Naive thymus-derived CD4-positive, alpha-beta T cell (primary cell): ENCODE measurements at regions of chr3 and their contacts with region 1.

Region 1: GRCh38 chr3:9731206-9732079 is at the start of gene BRPF1:
- DNase-seq: peak; percentile 91 to 99 (median 98)
- ATAC-seq: peak; percentile 96
- H3K4me3 ChIP-seq: peak within 1 kb of the TSS; percentile 85
- H3K4me3 Mint-ChIP-seq: peak within 1 kb of the TSS; percentile 91 to 98 (median 93)
- H3K27ac ChIP-seq: peak within 1 kb of the TSS; percentile 88
- H3K27ac Mint-ChIP-seq: peak within 1 kb of the TSS; percentile 86 to 97 (median 95)
- H3K4me1 ChIP-seq: peaks cover 22 to 32% of the 10 kb centered on the region in 2 donors
- H3K4me1 Mint-ChIP-seq: peaks cover 49 to 77% (median 72%) of the 10 kb centered on the region in 7 donors
- H3K27me3 ChIP-seq: no peaks in the 10 kb centered on the region
- H3K27me3 Mint-ChIP-seq: no peaks in the 10 kb centered on the region
- total RNA-seq, gene BRPF1: 32.0 to 42.4 (median 39.5) TPM

Region 2: DNA sequence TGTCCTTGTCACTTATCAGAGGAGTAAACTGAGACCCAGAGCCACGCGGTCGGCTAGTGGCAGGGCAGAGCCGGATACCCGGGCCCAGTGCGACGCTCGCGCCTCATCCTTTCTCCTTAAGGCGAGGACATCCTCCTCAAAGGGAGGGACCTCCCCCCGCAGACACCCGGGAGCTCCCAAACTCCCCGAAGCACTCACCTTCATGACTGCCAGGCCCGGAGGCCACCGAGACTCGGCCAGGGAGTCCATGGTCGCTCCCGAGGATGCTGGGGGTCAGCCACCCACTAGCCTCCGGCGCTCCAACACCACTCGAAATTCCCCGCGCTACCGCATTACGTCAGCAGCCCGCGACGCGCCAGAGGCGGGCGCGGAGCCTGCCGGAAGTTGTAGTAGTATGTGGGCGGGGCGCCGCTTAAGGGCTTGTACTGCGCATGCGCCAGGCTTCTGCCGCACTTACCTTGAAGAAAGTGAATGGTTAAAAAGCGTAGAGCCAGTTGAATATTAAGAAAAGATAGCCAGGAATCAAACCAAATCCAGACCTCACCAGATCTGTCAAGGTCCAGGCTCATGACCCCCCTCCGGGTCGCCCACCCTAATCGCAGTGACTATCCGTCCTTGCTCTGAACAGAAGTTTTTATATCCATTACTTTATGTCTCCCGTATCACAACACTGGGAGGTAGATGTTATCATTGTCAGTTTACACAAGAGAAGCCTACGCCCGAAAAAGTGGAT is 768.1 kb before region 1 on chr3 and contains the start of gene RAD18:
- CTCF ChIA-PET with region 1: no interaction called
- POLR2A ChIA-PET with region 1: no interaction called
- intact Hi-C with region 1: loop called (anchors 1 to 5 kb)
- DNase-seq: peak; percentile 87 to 95 (median 92)
- ATAC-seq: peak; percentile 97
- H3K4me3 ChIP-seq: peak within 1 kb of the TSS; percentile 80
- H3K4me3 Mint-ChIP-seq: peak within 1 kb of the TSS; percentile 85 to 99 (median 96)
- H3K27ac ChIP-seq: peak within 1 kb of the TSS; percentile 94
- H3K27ac Mint-ChIP-seq: peak within 1 kb of the TSS; percentile 94 to 99 (median 97)
- H3K4me1 ChIP-seq: peaks cover 6 to 10% of the 10 kb centered on the region in 2 donors
- H3K4me1 Mint-ChIP-seq: peaks cover 7 to 45% (median 38%) of the 10 kb centered on the region in 7 donors
- H3K27me3 ChIP-seq: no peaks in the 10 kb centered on the region
- H3K27me3 Mint-ChIP-seq: peaks cover 0 to 8% (median 4%) of the 10 kb centered on the region in 5 donors
- total RNA-seq, gene RAD18: 9.3 to 36.4 (median 18.2) TPM

Region 3: DNA sequence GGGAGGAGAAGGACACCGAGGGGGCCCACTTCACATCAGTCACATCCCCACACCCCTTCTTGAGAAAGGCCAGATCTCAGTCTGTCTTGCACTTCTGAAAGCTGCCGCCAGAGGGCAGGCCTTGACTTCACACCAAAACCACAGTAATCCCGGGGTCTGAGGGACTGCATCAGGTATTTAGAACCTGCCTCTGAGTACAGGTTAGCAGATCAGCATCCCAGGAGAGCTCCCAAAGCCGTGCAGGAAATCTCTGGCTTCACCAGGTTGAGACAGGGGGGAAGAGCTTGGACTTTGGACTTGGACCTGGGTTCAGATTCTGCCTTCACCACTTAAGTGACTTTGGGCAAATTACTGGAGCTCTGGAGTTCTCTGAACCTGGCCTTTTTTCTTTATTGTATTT is 228.2 kb before region 1 on chr3:
- CTCF ChIA-PET with region 1: no interaction called
- POLR2A ChIA-PET with region 1: no interaction called
- intact Hi-C with region 1: loop called in 1 of 2 experiments (anchors 1 kb)
- DNase-seq: peak; percentile 38 to 71 (median 60)
- ATAC-seq: peak; percentile 71
- H3K4me3 ChIP-seq: no peak overlapping the region
- H3K4me3 Mint-ChIP-seq: no peak overlapping the region
- H3K27ac ChIP-seq: no peak overlapping the region
- H3K27ac Mint-ChIP-seq: no peak overlapping the region
- H3K4me1 ChIP-seq: peaks cover 7 to 11% of the 10 kb centered on the region in 2 donors
- H3K4me1 Mint-ChIP-seq: peaks cover 0 to 9% (median 5%) of the 10 kb centered on the region in 7 donors
- H3K27me3 ChIP-seq: peaks cover 5 to 15% of the 10 kb centered on the region in 2 donors
- H3K27me3 Mint-ChIP-seq: peaks cover 28 to 44% (median 34%) of the 10 kb centered on the region in 5 donors

Region 4: GRCh38 chr3:9669720-9670432 is 61.6 kb before region 1 on chr3:
- CTCF ChIA-PET with region 1: no interaction called
- POLR2A ChIA-PET with region 1: no interaction called
- intact Hi-C with region 1: no loop called
- DNase-seq: no peak
- ATAC-seq: no peak
- H3K4me3 ChIP-seq: no peak overlapping the region
- H3K4me3 Mint-ChIP-seq: no peak overlapping the region
- H3K27ac ChIP-seq: no peak overlapping the region
- H3K27ac Mint-ChIP-seq: peak overlapping the region in 2 of 9 donors; percentile 17 to 45
- H3K4me1 ChIP-seq: no peaks in the 10 kb centered on the region
- H3K4me1 Mint-ChIP-seq: peaks cover 0 to 7% (median 0%) of the 10 kb centered on the region in 7 donors
- H3K27me3 ChIP-seq: no peaks in the 10 kb centered on the region
- H3K27me3 Mint-ChIP-seq: no peaks in the 10 kb centered on the region

Region 5: GRCh38 chr3:9743548-9743947 is 12.1 kb after region 1 on chr3:
- CTCF ChIA-PET with region 1: interaction called, 7 read pairs
- POLR2A ChIA-PET with region 1: interaction called, 33 read pairs
- intact Hi-C with region 1: no loop called
- DNase-seq: no peak
- ATAC-seq: no peak
- H3K4me3 ChIP-seq: no peak overlapping the region
- H3K4me3 Mint-ChIP-seq: no peak overlapping the region
- H3K27ac ChIP-seq: no peak overlapping the region
- H3K27ac Mint-ChIP-seq: no peak overlapping the region
- H3K4me1 ChIP-seq: no peaks in the 10 kb centered on the region
- H3K4me1 Mint-ChIP-seq: peaks cover 4 to 12% (median 8%) of the 10 kb centered on the region in 7 donors
- H3K27me3 ChIP-seq: no peaks in the 10 kb centered on the region
- H3K27me3 Mint-ChIP-seq: no peaks in the 10 kb centered on the region

Region 6: DNA sequence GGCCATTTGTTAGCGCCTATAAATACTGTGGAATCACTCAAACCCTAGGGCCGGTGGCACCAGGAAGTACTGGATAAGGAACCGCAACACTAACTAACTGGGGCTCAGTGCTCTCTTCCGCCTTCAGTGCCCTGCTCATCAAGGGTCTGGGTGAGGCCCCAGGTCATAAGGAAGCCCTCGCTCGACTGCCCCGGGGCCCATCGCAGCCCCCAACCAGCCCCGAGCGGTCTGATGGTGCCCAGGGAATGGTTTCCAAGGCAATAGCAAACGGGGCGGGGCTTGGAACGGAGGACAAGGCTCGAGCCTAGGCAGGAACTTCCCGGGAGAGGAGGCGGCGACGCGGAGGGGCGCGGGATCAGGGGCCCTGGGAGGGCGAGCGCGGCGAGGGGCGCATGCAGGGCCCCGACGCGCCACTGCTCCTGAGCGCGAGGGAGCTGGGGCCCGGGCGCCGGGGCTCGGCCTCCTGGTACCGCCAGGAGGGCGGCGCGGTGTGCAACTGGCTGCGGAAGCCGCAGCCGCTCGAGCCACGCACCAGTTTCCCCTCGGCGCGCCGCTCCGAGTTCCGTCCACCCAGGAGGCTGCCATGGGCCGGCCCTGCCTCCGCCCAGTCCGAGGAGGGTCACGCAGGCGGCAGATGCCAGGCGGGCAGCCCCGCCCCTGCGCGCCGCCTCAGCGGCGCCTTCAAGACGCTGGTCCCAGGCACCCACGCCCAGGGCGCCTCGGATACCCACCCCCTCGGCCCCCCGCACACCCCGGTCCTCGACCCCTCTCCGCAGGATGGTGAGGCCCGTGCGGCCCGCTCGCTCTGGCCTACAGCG is 78.4 kb after region 1 on chr3 and contains the start of gene TTLL3:
- CTCF ChIA-PET with region 1: no interaction called
- POLR2A ChIA-PET with region 1: interaction called, 15 read pairs
- intact Hi-C with region 1: loop called in 1 of 2 experiments (anchors 1 kb)
- DNase-seq: peak; percentile 33 to 50 (median 43)
- ATAC-seq: peak; percentile 76
- H3K4me3 ChIP-seq: peak within 1 kb of the TSS; percentile 76
- H3K4me3 Mint-ChIP-seq: peak within 1 kb of the TSS; percentile 89 to 96 (median 92)
- H3K27ac ChIP-seq: peak within 1 kb of the TSS; percentile 90
- H3K27ac Mint-ChIP-seq: peak within 1 kb of the TSS; percentile 92 to 98 (median 96)
- H3K4me1 ChIP-seq: peaks cover 21 to 28% of the 10 kb centered on the region in 2 donors
- H3K4me1 Mint-ChIP-seq: peaks cover 31 to 41% (median 38%) of the 10 kb centered on the region in 7 donors
- H3K27me3 ChIP-seq: no peaks in the 10 kb centered on the region
- H3K27me3 Mint-ChIP-seq: no peaks in the 10 kb centered on the region
- total RNA-seq, gene TTLL3: 54.9 to 106 (median 68.0) TPM

Region 7: GRCh38 chr3:9986237-9986725 is 254.8 kb after region 1 on chr3:
- CTCF ChIA-PET with region 1: no interaction called
- POLR2A ChIA-PET with region 1: no interaction called
- intact Hi-C with region 1: loop called in 1 of 2 experiments (anchors 5 kb)
- DNase-seq: no peak
- ATAC-seq: peak; percentile 52
- H3K4me3 ChIP-seq: peak overlapping the region; percentile 100
- H3K4me3 Mint-ChIP-seq: peak overlapping the region; percentile 95 to 99 (median 98)
- H3K27ac ChIP-seq: peak overlapping the region; percentile 96
- H3K27ac Mint-ChIP-seq: peak overlapping the region; percentile 95 to 100 (median 98)
- H3K4me1 ChIP-seq: peaks cover 13 to 15% of the 10 kb centered on the region in 2 donors
- H3K4me1 Mint-ChIP-seq: peaks cover 0 to 48% (median 35%) of the 10 kb centered on the region in 7 donors
- H3K27me3 ChIP-seq: no peaks in the 10 kb centered on the region
- H3K27me3 Mint-ChIP-seq: no peaks in the 10 kb centered on the region

Region 8: DNA sequence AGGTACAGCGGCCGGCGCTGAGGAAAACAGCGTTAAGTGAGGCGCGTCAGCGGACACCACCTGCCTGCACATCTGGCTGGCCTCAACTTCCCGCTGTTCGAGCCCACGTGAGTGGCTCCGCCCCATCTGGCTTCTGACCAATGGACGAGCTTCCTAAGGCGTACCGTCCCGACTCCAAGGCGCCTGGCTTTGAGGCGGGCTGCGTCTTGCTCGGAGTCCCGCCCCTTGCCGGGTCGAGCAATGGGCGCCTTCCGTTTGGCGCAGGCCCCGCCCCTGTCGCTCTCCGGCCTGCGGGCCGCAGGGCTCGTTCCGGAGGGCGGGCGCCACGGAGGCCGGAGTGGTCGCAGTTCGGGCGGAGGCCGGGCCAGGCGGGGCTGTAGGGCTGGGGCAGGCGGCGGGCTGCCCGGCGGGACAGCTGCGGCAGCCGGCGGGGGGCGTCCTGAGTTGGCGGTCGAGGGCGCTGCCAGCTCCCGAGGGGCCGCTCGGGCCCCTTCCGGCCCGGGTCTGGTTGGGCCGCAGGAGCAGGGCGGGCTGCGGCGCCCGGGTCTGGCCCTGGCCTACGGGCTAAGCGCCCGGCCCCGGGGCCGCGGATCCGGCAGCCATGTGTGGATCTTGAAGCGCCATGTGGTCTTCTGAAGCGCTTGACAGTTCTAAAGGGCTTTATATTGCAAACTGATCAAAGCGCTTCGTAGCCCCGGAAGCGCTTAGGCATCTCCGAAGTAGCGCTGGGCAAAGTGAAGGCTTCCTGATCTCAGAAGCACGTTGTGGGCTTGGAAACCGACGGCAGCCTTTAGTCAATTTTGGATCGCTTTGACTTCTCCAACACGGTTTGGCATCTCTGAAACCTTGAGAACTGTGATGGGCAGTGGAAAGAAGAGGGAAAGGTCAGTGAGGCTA is 517.0 kb after region 1 on chr3 and contains the start of gene TATDN2:
- CTCF ChIA-PET with region 1: no interaction called
- POLR2A ChIA-PET with region 1: no interaction called
- intact Hi-C with region 1: loop called (anchors 1 kb)
- DNase-seq: peak; percentile 80 to 91 (median 88)
- ATAC-seq: peak; percentile 98
- H3K4me3 ChIP-seq: peak within 1 kb of the TSS; percentile 99
- H3K4me3 Mint-ChIP-seq: peak within 1 kb of the TSS; percentile 96 to 100 (median 99)
- H3K27ac ChIP-seq: peak within 1 kb of the TSS; percentile 80
- H3K27ac Mint-ChIP-seq: peak within 1 kb of the TSS; percentile 91 to 97 (median 95)
- H3K4me1 ChIP-seq: peaks cover 28 to 30% of the 10 kb centered on the region in 2 donors
- H3K4me1 Mint-ChIP-seq: peaks cover 44 to 63% (median 52%) of the 10 kb centered on the region in 7 donors
- H3K27me3 ChIP-seq: no peaks in the 10 kb centered on the region
- H3K27me3 Mint-ChIP-seq: no peaks in the 10 kb centered on the region
- total RNA-seq, gene TATDN2: 52.9 to 88.8 (median 71.6) TPM